ENCODE measurements at regions of chrX and their contacts with region 1.

Region 1: GRCh38 chrX:65723706-65724105 is 56.3 kb downstream of the MSN start:
- DNase-seq: no peak
- ATAC-seq: no peak

Region 2: GRCh38 chrX:65595460-65595876 is 128.2 kb before region 1 on chrX:
- intact Hi-C with region 1: loop called (anchors 10 kb)
- DNase-seq: peak; percentile 92
- ATAC-seq: peak; percentile 96